ENCODE measurements at regions of chr2 and their contacts with region 1.

Region 1: GRCh38 chr2:197383823-197384222 is 51.0 kb downstream of the SF3B1 start:
- DNase-seq: no peak
- H3K4me3 Mint-ChIP-seq: no peak overlapping the region
- H3K27ac Mint-ChIP-seq: no peak overlapping the region
- H3K4me1 Mint-ChIP-seq: peaks cover 8% of the 10 kb centered on the region
- H3K27me3 Mint-ChIP-seq: peaks cover 3% of the 10 kb centered on the region

Region 2: GRCh38 chr2:197615016-197615652 is 231.3 kb after region 1 on chr2:
- CTCF ChIA-PET with region 1: no interaction called
- intact Hi-C with region 1: loop called (anchors 10 kb)
- DNase-seq: peak; percentile 31
- H3K4me3 Mint-ChIP-seq: no peak overlapping the region
- H3K27ac Mint-ChIP-seq: no peak overlapping the region
- H3K4me1 Mint-ChIP-seq: peaks cover 11% of the 10 kb centered on the region
- H3K27me3 Mint-ChIP-seq: no peaks in the 10 kb centered on the region

Region 3: DNA sequence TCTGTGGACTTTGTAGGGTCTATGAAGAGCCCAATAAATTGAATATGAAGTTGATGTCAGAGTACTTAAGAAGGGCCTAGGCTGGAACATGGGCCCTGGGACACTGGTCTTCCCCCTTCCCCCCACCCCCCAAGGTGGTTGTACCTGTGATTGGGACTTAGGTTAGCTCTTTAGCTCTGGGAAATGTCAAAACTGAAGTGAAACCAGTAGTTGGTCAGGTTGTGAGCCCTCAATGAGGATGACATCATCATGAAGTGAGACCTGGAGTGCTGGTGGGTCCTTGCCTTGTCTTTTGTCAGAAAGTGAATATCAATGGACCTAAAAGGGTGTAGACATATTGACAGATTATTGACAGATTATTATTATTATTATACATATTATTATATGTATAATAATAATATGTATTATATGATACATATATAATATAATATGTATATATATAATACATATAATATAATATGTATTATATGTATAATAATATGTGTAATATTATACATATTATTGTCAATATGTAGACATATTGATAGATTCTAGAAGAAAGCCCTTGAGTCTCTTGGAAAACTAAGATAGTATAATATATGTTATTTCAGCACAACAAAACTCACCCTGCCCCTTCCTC is 326.7 kb after region 1 on chr2:
- CTCF ChIA-PET with region 1: no interaction called
- intact Hi-C with region 1: no loop called
- DNase-seq: no peak
- H3K4me3 Mint-ChIP-seq: no peak overlapping the region
- H3K27ac Mint-ChIP-seq: no peak overlapping the region
- H3K4me1 Mint-ChIP-seq: peaks cover 45% of the 10 kb centered on the region
- H3K27me3 Mint-ChIP-seq: no peaks in the 10 kb centered on the region

Measured in activated naive CD4-positive, alpha-beta T cell treated with anti-CD3 and anti-CD28 coated beads for 36 hours (primary cell).